B cell (primary cell): ENCODE measurements at regions of chr13 and their contacts with region 1.

Region 1: DNA sequence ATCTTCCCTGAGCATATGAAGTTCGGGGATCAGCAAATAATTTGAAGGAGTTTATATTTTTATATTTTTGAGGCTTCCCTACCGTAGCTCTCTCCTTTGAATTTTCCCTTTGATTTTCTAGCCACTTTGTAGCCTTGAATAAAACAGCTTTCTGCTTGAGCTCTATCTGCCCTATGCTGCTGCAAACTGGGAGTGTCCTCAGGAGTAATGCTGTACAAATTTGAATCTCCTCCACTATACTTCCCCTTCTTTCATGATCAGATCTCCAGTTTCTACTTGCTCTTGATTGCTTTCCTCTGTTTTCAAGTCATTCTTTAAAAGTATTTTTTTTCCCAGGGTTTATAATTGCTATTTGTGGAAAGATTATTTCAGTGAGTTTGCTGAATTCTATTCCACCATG is 14.6 kb downstream of the PDS5B start:
- DNase-seq: no peak
- ATAC-seq: no peak
- H3K4me3 ChIP-seq: no peak overlapping the region
- H3K4me3 Mint-ChIP-seq: no peak overlapping the region
- H3K27ac ChIP-seq: peak overlapping the region in 1 of 2 donors; percentile 2
- H3K27ac Mint-ChIP-seq: no peak overlapping the region
- H3K4me1 ChIP-seq: peaks cover 10 to 13% of the 10 kb centered on the region in 2 donors
- H3K4me1 Mint-ChIP-seq: peaks cover 58% of the 10 kb centered on the region
- H3K27me3 ChIP-seq: no peaks in the 10 kb centered on the region
- H3K27me3 Mint-ChIP-seq: no peaks in the 10 kb centered on the region
- CTCF ChIP-seq: no peak

Region 2: DNA sequence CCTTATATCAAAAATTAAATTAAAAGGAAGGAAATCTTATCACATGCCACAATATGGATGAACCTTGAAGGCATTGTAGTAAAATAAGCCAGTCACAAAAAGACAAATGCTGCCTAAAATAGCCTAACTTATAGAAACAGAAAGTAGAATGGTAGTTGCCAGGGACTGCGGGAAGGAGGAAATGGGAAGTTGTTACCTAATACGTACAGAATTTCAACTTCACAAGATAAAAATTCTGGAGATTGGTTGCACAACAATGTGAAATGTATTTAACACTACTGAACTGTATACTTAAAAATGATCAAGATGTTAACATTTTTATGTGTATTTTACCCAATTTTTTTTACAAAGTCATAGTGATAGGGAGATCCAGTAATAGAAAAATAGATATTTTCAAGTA is 52.1 kb before region 1 on chr13:
- CTCF ChIA-PET with region 1: no interaction called
- POLR2A ChIA-PET with region 1: no interaction called
- intact Hi-C with region 1: no loop called
- DNase-seq: no peak
- ATAC-seq: no peak
- H3K4me3 ChIP-seq: no peak overlapping the region
- H3K4me3 Mint-ChIP-seq: no peak overlapping the region
- H3K27ac ChIP-seq: no peak overlapping the region
- H3K27ac Mint-ChIP-seq: no peak overlapping the region
- H3K4me1 ChIP-seq: peaks cover 4 to 12% of the 10 kb centered on the region in 2 donors
- H3K4me1 Mint-ChIP-seq: peaks cover 10% of the 10 kb centered on the region
- H3K27me3 ChIP-seq: no peaks in the 10 kb centered on the region
- H3K27me3 Mint-ChIP-seq: no peaks in the 10 kb centered on the region
- CTCF ChIP-seq: no peak

Region 3: GRCh38 chr13:32624441-32624840 is 23.6 kb after region 1 on chr13:
- CTCF ChIA-PET with region 1: interaction called, 3 read pairs
- POLR2A ChIA-PET with region 1: no interaction called
- intact Hi-C with region 1: loop called (anchors 2 kb)
- DNase-seq: no peak
- ATAC-seq: no peak
- H3K4me3 ChIP-seq: no peak overlapping the region
- H3K4me3 Mint-ChIP-seq: no peak overlapping the region
- H3K27ac ChIP-seq: no peak overlapping the region
- H3K27ac Mint-ChIP-seq: no peak overlapping the region
- H3K4me1 ChIP-seq: peaks cover 2 to 12% of the 10 kb centered on the region in 2 donors
- H3K4me1 Mint-ChIP-seq: peaks cover 40% of the 10 kb centered on the region
- H3K27me3 ChIP-seq: no peaks in the 10 kb centered on the region
- H3K27me3 Mint-ChIP-seq: no peaks in the 10 kb centered on the region
- CTCF ChIP-seq: no peak

Region 4: DNA sequence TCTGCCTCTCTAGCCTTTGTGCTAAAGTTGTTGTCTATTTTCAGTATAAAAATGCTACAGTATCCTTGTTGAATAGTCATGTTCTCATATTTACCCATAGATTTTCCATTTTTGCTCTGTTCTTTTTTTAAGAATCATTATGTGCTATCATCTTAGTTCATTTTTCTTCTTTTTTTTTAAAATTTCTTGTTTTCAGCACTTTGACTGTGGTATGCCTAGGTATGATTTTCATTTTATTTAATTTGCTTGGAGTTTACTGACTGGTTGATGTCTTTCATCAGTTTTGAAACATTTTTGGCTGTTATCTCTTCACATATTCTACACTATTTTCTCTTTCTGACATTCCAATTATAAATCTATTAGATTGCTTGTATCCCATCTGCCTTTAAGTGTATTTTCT is 178.2 kb after region 1 on chr13:
- CTCF ChIA-PET with region 1: no interaction called
- POLR2A ChIA-PET with region 1: no interaction called
- intact Hi-C with region 1: no loop called
- DNase-seq: no peak
- ATAC-seq: no peak
- H3K4me3 ChIP-seq: no peak overlapping the region
- H3K4me3 Mint-ChIP-seq: no peak overlapping the region
- H3K27ac ChIP-seq: no peak overlapping the region
- H3K27ac Mint-ChIP-seq: no peak overlapping the region
- H3K4me1 ChIP-seq: no peaks in the 10 kb centered on the region
- H3K4me1 Mint-ChIP-seq: no peaks in the 10 kb centered on the region
- H3K27me3 ChIP-seq: no peaks in the 10 kb centered on the region
- H3K27me3 Mint-ChIP-seq: no peaks in the 10 kb centered on the region
- CTCF ChIP-seq: no peak